ENCODE measurements at regions of chr15 and their contacts with region 1.

Region 1: GRCh38 chr15:84631706-84632272 is 22.3 kb downstream of the WDR73 start:
- DNase-seq: no peak
- H3K4me3 Mint-ChIP-seq: peak overlapping the region; percentile 95
- H3K27ac Mint-ChIP-seq: peak overlapping the region; percentile 92
- H3K4me1 Mint-ChIP-seq: peaks cover 34% of the 10 kb centered on the region
- H3K27me3 Mint-ChIP-seq: no peaks in the 10 kb centered on the region

Region 2: GRCh38 chr15:84600851-84601838 is 30.6 kb before region 1 on chr15 and contains the start of gene ZSCAN2:
- intact Hi-C with region 1: loop called (anchors 1 kb)
- DNase-seq: peak; percentile 92
- H3K4me3 Mint-ChIP-seq: peak within 1 kb of the TSS; percentile 90
- H3K27ac Mint-ChIP-seq: peak within 1 kb of the TSS; percentile 73
- H3K4me1 Mint-ChIP-seq: peaks cover 48% of the 10 kb centered on the region
- H3K27me3 Mint-ChIP-seq: no peaks in the 10 kb centered on the region
- total RNA-seq, gene ZSCAN2: 10.1 and 10.6 TPM in 2 replicates

Region 3: DNA sequence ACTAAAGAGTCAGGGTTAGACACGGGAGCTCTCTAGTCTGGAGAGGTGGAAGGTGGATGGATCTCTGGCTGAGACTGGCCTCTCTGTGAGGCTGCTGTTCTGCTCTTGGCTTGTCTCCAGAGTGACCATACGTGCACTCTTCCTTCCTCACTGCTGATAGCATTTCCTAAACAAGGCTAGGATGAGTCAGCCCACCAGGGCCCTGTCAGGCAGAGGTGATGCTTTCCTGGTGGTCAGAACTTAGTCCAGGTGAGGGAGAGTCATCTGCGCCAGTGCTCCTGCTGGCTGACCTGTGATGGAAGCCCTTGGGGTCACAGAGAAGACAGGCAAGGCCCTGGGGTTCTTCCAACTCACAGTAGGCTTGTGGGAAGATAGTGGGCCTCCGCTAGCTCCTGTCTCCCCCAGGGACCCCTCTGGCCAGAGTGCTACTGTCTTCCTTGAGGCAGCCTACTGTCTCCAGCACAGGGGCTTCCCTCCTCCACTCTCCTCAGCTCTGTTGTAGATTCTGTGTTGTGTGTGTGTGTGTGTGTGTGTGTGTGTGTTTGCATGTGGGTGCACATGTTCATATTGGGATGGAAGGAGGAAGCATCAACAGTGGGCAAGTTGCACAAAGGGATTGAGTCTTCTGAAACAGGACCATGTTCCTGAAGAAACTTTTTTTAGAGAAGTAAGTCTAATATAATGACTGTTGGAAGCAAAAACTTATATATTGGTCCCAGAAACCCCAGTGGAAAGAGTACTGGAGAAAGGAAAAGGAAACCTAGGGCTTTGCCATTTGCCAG is 201.8 kb after region 1 on chr15:
- intact Hi-C with region 1: no loop called
- DNase-seq: no peak
- H3K4me3 Mint-ChIP-seq: no peak overlapping the region
- H3K27ac Mint-ChIP-seq: no peak overlapping the region
- H3K4me1 Mint-ChIP-seq: no peaks in the 10 kb centered on the region
- H3K27me3 Mint-ChIP-seq: peaks cover 31% of the 10 kb centered on the region